B cell (primary cell): ENCODE measurements at regions of chr18 and their contacts with region 1.

Region 1: GRCh38 chr18:77000527-77000926 is 132.1 kb downstream of the MBP start:
- DNase-seq: peak; percentile 70
- ATAC-seq: peak; percentile 57
- H3K4me3 ChIP-seq: no peak overlapping the region
- H3K4me3 Mint-ChIP-seq: no peak overlapping the region
- H3K27ac ChIP-seq: no peak overlapping the region
- H3K27ac Mint-ChIP-seq: peak overlapping the region; percentile 61
- H3K4me1 ChIP-seq: peaks cover 12 to 19% of the 10 kb centered on the region in 2 donors
- H3K4me1 Mint-ChIP-seq: peaks cover 22% of the 10 kb centered on the region
- H3K27me3 ChIP-seq: peaks cover 0 to 2% (median 0%) of the 10 kb centered on the region in 4 experiments
- H3K27me3 Mint-ChIP-seq: no peaks in the 10 kb centered on the region
- CTCF ChIP-seq: peak; percentile 99

Region 2: GRCh38 chr18:76922107-76922506 is 78.4 kb before region 1 on chr18:
- CTCF ChIA-PET with region 1: interaction called, 39 read pairs
- POLR2A ChIA-PET with region 1: no interaction called
- intact Hi-C with region 1: loop called (anchors 1 kb)
- DNase-seq: peak; percentile 83
- ATAC-seq: peak; percentile 100
- H3K4me3 ChIP-seq: no peak overlapping the region
- H3K4me3 Mint-ChIP-seq: peak overlapping the region; percentile 3
- H3K27ac ChIP-seq: no peak overlapping the region
- H3K27ac Mint-ChIP-seq: peak overlapping the region; percentile 68
- H3K4me1 ChIP-seq: peaks cover 0 to 9% of the 10 kb centered on the region in 2 donors
- H3K4me1 Mint-ChIP-seq: peaks cover 10% of the 10 kb centered on the region
- H3K27me3 ChIP-seq: no peaks in the 10 kb centered on the region
- H3K27me3 Mint-ChIP-seq: no peaks in the 10 kb centered on the region
- CTCF ChIP-seq: peak; percentile 83

Region 3: DNA sequence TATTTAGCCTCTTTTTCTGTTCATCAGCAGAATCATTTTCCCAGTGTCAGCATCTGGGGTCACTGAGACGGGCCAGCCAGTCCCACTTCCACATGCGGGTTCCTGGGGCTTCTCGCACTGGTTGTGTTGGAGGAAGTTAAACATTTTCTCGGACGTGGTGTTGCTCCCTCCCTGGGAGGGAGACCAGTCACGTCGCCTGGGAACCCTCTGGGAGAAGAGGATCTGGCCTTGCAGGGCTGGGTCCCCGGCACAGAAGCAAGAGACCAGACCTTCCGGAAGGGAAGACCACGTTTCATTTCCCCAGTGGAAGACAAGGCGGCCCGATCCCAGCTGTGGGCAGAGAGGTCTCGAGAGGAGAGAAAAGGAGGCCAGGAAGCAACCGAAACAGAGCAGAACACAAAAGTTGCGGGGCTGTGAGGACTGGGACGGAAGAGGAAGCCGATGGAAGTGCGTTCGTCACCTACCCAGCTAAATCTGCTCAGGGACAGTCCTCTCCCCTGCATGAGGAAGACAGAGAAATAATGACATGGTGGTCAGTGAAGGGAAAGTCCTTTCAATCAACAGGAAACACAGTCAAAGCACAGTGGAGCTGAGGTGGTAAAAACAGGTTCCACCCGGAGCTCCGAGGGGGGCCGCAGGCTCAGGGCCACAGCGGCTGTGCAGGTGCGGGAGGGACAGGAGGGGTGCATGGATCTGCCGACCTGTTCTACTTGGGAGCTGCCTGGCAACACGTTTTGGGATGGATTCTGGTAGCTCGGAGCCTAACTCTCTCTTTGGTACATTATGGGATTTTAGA is 12.3 kb before region 1 on chr18:
- CTCF ChIA-PET with region 1: interaction called, 83 read pairs
- POLR2A ChIA-PET with region 1: no interaction called
- intact Hi-C with region 1: no loop called
- DNase-seq: no peak
- ATAC-seq: no peak
- H3K4me3 ChIP-seq: peak overlapping the region in 1 of 5 experiments; percentile 4
- H3K4me3 Mint-ChIP-seq: peak overlapping the region; percentile 69
- H3K27ac ChIP-seq: no peak overlapping the region
- H3K27ac Mint-ChIP-seq: peak overlapping the region; percentile 79
- H3K4me1 ChIP-seq: peaks cover under 1 to 27% of the 10 kb centered on the region in 2 donors
- H3K4me1 Mint-ChIP-seq: peaks cover 30% of the 10 kb centered on the region
- H3K27me3 ChIP-seq: no peaks in the 10 kb centered on the region
- H3K27me3 Mint-ChIP-seq: no peaks in the 10 kb centered on the region
- CTCF ChIP-seq: no peak

Region 4: DNA sequence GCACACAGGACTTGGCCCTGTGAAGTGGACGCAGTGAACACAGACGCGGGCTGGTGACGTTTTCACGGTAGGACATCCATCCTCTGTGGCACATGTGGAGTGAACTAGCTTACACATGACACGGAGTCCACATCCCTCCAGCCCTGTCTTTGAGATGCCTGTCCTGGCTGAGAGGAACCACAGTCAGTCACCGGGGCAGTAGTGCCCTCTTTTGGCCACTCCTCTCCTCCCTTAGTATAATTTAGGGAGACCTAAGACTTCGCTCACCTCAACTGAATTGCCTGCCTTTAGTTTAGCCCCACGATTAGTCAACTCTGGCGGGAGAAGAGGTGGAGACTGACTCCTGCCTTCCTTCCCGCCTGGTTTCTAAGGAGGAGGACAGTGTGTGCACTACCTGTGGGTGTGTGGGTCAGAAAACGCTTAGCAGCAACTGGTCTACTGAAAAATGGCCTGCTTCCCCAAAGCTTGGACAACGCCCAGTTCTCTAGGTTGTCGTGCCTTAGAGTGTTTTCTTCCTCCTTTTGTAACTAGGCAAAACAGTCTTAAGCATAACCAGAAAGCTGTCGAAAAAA is 61.5 kb after region 1 on chr18:
- CTCF ChIA-PET with region 1: interaction called, 70 read pairs
- POLR2A ChIA-PET with region 1: no interaction called
- intact Hi-C with region 1: loop called (anchors 1 kb)
- DNase-seq: peak; percentile 87
- ATAC-seq: peak; percentile 50
- H3K4me3 ChIP-seq: no peak overlapping the region
- H3K4me3 Mint-ChIP-seq: peak overlapping the region; percentile 77
- H3K27ac ChIP-seq: peak overlapping the region; percentile 91 to 97
- H3K27ac Mint-ChIP-seq: peak overlapping the region; percentile 100
- H3K4me1 ChIP-seq: peaks cover 77 to 80% of the 10 kb centered on the region in 2 donors
- H3K4me1 Mint-ChIP-seq: peaks cover 80% of the 10 kb centered on the region
- H3K27me3 ChIP-seq: no peaks in the 10 kb centered on the region
- H3K27me3 Mint-ChIP-seq: no peaks in the 10 kb centered on the region
- CTCF ChIP-seq: no peak

Region 5: DNA sequence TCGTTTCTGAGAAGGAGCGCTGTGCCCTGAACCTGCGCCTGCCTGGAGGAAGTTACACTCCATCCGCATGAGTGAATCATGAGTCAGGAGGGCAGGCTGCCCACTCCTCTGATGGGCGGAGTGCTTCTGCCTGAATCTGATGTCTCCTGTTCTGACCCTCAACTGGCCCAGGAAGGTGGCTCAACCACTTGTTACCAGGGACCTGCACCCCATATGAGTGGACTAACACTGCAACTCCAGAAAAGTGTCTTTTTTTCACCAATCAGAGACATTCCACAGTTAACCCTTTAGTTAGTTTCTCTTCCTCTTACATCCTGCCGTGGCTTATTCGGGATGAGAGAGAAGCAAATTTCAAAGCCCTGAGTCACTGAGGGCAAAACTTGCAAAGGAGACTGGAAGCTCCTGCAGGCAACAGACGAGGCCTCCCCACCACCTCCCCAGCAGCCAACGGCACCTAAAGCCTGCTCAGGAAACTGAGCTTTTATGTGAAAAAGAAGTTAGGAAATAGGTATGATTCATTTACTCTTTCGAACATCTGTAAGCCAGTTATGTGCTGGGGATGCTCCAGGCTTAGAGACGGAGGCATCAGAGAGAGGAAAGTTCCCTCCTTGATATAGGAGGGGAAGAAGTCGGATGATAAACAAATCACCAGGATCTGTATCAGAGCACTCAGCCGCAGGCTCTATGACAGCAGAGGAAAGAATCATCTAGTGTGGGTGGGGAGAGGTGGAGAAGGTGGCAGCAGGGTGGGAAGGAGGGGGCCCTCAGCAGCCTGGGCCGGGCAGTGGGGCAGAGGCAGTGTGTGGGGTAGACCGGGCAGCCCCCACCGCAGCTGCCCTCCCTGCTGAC is 101.1 kb after region 1 on chr18:
- CTCF ChIA-PET with region 1: interaction called, 14 read pairs
- POLR2A ChIA-PET with region 1: no interaction called
- intact Hi-C with region 1: no loop called
- DNase-seq: peak; percentile 63
- ATAC-seq: peak; percentile 69
- H3K4me3 ChIP-seq: peak overlapping the region in 3 of 5 experiments; percentile 12 to 42 (median 25)
- H3K4me3 Mint-ChIP-seq: peak overlapping the region; percentile 84
- H3K27ac ChIP-seq: peak overlapping the region; percentile 43 to 58
- H3K27ac Mint-ChIP-seq: peak overlapping the region; percentile 89
- H3K4me1 ChIP-seq: peaks cover 65 to 78% of the 10 kb centered on the region in 2 donors
- H3K4me1 Mint-ChIP-seq: peaks cover 85% of the 10 kb centered on the region
- H3K27me3 ChIP-seq: no peaks in the 10 kb centered on the region
- H3K27me3 Mint-ChIP-seq: no peaks in the 10 kb centered on the region
- CTCF ChIP-seq: no peak

Region 6: GRCh38 chr18:77132371-77133050 is 132.0 kb after region 1 on chr18 and contains the start of gene MBP:
- CTCF ChIA-PET with region 1: interaction called, 5 read pairs
- POLR2A ChIA-PET with region 1: no interaction called
- intact Hi-C with region 1: loop called (anchors 1 kb)
- DNase-seq: peak; percentile 77
- ATAC-seq: peak; percentile 52
- H3K4me3 ChIP-seq: peak within 1 kb of the TSS; percentile 34 to 90 (median 80)
- H3K4me3 Mint-ChIP-seq: peak within 1 kb of the TSS; percentile 96
- H3K27ac ChIP-seq: peak within 1 kb of the TSS; percentile 78 to 88
- H3K27ac Mint-ChIP-seq: peak within 1 kb of the TSS; percentile 93
- H3K4me1 ChIP-seq: peaks cover 45 to 54% of the 10 kb centered on the region in 2 donors
- H3K4me1 Mint-ChIP-seq: peaks cover 54% of the 10 kb centered on the region
- H3K27me3 ChIP-seq: no peaks in the 10 kb centered on the region
- H3K27me3 Mint-ChIP-seq: no peaks in the 10 kb centered on the region
- CTCF ChIP-seq: no peak
- total RNA-seq, gene MBP: 192 and 193 TPM in 2 replicates